ENCODE measurements at regions of chr7 and their contacts with region 1.

Region 1: GRCh38 chr7:119270045-119270464 is 1002.9 kb upstream of the KCND2 start:
- DNase-seq: peak; percentile 58
- H3K4me3 Mint-ChIP-seq: no peak overlapping the region
- H3K27ac Mint-ChIP-seq: no peak overlapping the region
- H3K4me1 Mint-ChIP-seq: peaks cover 14% of the 10 kb centered on the region
- H3K27me3 Mint-ChIP-seq: no peaks in the 10 kb centered on the region
- CTCF ChIP-seq: peak; percentile 64

Region 2: GRCh38 chr7:119351320-119351719 is 81.3 kb after region 1 on chr7:
- CTCF ChIA-PET with region 1: no interaction called
- intact Hi-C with region 1: no loop called
- DNase-seq: no peak
- H3K4me3 Mint-ChIP-seq: no peak overlapping the region
- H3K27ac Mint-ChIP-seq: no peak overlapping the region
- H3K4me1 Mint-ChIP-seq: no peaks in the 10 kb centered on the region
- H3K27me3 Mint-ChIP-seq: no peaks in the 10 kb centered on the region
- CTCF ChIP-seq: no peak

Region 3: DNA sequence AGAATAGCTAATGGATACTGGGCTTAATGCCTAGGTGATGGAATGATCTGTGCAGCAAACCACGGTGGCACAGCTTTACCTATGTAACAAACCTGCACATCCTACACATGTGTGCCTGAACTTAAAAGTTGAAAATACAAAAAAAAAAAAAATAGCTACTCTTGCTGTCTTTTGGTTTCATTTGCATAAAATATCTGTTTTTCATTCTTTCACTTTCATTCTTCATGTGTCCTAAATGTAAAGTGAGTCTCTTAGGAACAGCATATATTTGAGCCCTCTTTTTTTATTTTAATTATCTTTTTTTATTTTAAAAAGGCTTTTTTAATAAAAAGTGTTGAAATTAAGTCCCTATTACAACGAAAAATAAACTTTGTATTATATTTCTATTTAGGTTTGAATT is 166.8 kb after region 1 on chr7:
- CTCF ChIA-PET with region 1: no interaction called
- intact Hi-C with region 1: no loop called
- DNase-seq: no peak
- H3K4me3 Mint-ChIP-seq: no peak overlapping the region
- H3K27ac Mint-ChIP-seq: no peak overlapping the region
- H3K4me1 Mint-ChIP-seq: no peaks in the 10 kb centered on the region
- H3K27me3 Mint-ChIP-seq: no peaks in the 10 kb centered on the region
- CTCF ChIP-seq: no peak

Region 4: DNA sequence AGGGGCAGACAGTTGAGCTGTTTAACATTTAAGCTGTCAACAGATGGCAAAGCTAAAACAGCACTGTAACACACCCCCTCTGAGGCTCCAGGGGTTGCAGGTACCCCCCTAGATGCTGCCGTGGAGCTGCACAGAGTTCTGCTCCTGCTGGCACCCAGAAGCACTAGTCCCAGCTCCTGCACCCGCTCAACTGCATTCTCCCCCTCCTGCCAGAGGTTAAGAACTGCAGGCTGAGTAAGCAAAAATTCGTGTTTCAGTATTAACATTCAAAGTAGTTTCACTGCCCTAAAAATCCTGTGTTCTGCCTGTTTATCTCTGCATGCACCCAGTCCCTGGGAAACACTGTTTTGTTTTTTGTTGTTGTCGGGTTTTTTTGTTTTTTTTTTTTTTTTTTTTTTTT is 212.2 kb after region 1 on chr7:
- CTCF ChIA-PET with region 1: no interaction called
- intact Hi-C with region 1: loop called (anchors 2 kb)
- DNase-seq: peak; percentile 51
- H3K4me3 Mint-ChIP-seq: no peak overlapping the region
- H3K27ac Mint-ChIP-seq: no peak overlapping the region
- H3K4me1 Mint-ChIP-seq: no peaks in the 10 kb centered on the region
- H3K27me3 Mint-ChIP-seq: no peaks in the 10 kb centered on the region
- CTCF ChIP-seq: peak; percentile 46

Region 5: GRCh38 chr7:119545118-119545517 is 275.1 kb after region 1 on chr7:
- CTCF ChIA-PET with region 1: no interaction called
- intact Hi-C with region 1: loop called (anchors 5 kb)
- DNase-seq: no peak
- H3K4me3 Mint-ChIP-seq: no peak overlapping the region
- H3K27ac Mint-ChIP-seq: peak overlapping the region; percentile 56
- H3K4me1 Mint-ChIP-seq: peaks cover 31% of the 10 kb centered on the region
- H3K27me3 Mint-ChIP-seq: peaks cover 19% of the 10 kb centered on the region
- CTCF ChIP-seq: no peak

Region 6: GRCh38 chr7:119935418-119936025 is 665.5 kb after region 1 on chr7:
- CTCF ChIA-PET with region 1: no interaction called
- intact Hi-C with region 1: loop called (anchors 10 kb)
- DNase-seq: no peak
- H3K4me3 Mint-ChIP-seq: no peak overlapping the region
- H3K27ac Mint-ChIP-seq: no peak overlapping the region
- H3K4me1 Mint-ChIP-seq: no peaks in the 10 kb centered on the region
- H3K27me3 Mint-ChIP-seq: no peaks in the 10 kb centered on the region
- CTCF ChIP-seq: peak; percentile 26

Measured in Calu3 (cell line).